ENCODE measurements at regions of chr12 and their contacts with region 1.

Region 1: GRCh38 chr12:48157018-48157888 is at the start of gene ASB8:
- DNase-seq: peak; percentile 98
- H3K4me3 Mint-ChIP-seq: peak within 1 kb of the TSS; percentile 94
- H3K27ac Mint-ChIP-seq: peak within 1 kb of the TSS; percentile 86
- H3K4me1 Mint-ChIP-seq: peaks cover 21% of the 10 kb centered on the region
- H3K27me3 Mint-ChIP-seq: no peaks in the 10 kb centered on the region
- total RNA-seq, gene ASB8: 33.3 and 36.1 TPM in 2 replicates

Region 2: DNA sequence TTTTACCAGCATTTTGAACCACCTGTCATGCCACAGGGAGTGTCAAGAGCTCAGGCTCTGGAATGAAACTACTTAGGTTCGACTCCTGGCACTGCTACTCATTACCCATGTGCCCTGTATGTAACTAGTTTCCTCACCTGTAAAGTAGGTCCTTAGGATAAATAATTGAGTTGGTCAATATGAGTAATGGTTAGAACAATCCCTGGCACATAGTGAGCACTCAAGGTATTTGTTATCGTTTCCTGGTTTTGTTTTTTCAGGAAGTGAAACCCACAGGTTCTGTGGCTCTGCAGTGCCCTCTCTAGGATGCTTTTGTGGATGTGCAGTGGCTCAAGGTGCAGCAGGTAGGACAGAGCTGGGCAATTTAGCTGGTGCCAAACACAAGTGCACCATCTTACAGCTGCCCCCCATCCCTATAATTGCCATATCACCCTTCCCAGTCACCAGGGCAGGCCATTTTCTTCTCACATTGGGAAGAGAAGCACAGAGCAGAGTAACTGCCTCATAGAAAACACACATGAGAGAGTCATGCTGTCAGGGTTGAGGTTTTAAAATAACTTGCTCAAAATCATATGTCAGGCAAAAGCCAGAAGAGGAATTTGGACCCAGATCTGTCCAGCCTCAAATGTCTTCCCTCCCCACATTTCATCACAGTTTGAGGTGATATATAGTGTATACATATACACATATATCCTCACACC is 748.9 kb before region 1 on chr12:
- intact Hi-C with region 1: no loop called
- DNase-seq: no peak
- H3K4me3 Mint-ChIP-seq: no peak overlapping the region
- H3K27ac Mint-ChIP-seq: no peak overlapping the region
- H3K4me1 Mint-ChIP-seq: peaks cover 42% of the 10 kb centered on the region
- H3K27me3 Mint-ChIP-seq: no peaks in the 10 kb centered on the region

Region 3: GRCh38 chr12:48119078-48119833 is 38.0 kb before region 1 on chr12 and contains the start of gene PFKM:
- intact Hi-C with region 1: loop called (anchors 1 kb)
- DNase-seq: peak; percentile 65
- H3K4me3 Mint-ChIP-seq: peak within 1 kb of the TSS; percentile 98
- H3K27ac Mint-ChIP-seq: peak within 1 kb of the TSS; percentile 75
- H3K4me1 Mint-ChIP-seq: peaks cover 17% of the 10 kb centered on the region
- H3K27me3 Mint-ChIP-seq: peaks cover 10% of the 10 kb centered on the region
- total RNA-seq, gene PFKM: 59.7 and 68.4 TPM in 2 replicates

Region 4: GRCh38 chr12:48183091-48183875 is 26.0 kb after region 1 on chr12 and contains the start of gene CCDC184:
- intact Hi-C with region 1: loop called (anchors 1 kb)
- DNase-seq: peak; percentile 76
- H3K4me3 Mint-ChIP-seq: peak within 1 kb of the TSS; percentile 91
- H3K27ac Mint-ChIP-seq: peak within 1 kb of the TSS; percentile 82
- H3K4me1 Mint-ChIP-seq: peaks cover 35% of the 10 kb centered on the region
- H3K27me3 Mint-ChIP-seq: peaks cover 52% of the 10 kb centered on the region
- total RNA-seq, gene CCDC184: 0.61 and 0.75 TPM in 2 replicates

Measured in activated T-helper 1 cell treated with anti-CD3 and anti-CD28 coated beads, Interleukin-12 subunit alpha, Interleukin-12 subunit beta, Interleukin-2, Interleukin-4 antibody, amounts not matched to agents 30 ng/mL and 10 ng/mL and 1 ng/mL, durations not matched to agents 14 hours and 24 hours and 36 hours (primary cell).